ENCODE measurements at regions of chr2 and their contacts with region 1.

Region 1: DNA sequence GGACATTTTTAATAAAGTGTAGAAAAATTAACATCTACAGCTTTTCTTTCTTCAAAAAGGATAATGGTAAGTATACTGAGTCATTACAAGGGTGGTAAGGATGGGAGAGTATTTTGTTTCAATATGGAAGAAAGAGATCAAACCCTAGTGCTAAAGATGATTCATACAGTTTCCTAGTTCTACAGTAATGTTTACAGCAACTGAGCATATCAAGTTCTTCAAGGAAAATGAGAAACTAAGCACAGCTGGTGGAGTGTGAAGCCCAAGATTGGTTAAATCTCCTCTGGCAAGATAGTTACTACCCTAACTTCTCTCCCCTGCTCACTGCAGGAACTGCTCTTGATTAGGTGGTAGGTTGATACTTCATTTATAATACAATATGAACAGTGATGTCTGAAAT is 467.5 kb downstream of the XIRP2 start:
- DNase-seq: no peak
- H3K4me3 ChIP-seq: no peak overlapping the region
- H3K27ac ChIP-seq: no peak overlapping the region
- H3K4me1 ChIP-seq: no peaks in the 10 kb centered on the region
- H3K27me3 ChIP-seq: no peaks in the 10 kb centered on the region
- CTCF ChIP-seq: no peak

Region 2: DNA sequence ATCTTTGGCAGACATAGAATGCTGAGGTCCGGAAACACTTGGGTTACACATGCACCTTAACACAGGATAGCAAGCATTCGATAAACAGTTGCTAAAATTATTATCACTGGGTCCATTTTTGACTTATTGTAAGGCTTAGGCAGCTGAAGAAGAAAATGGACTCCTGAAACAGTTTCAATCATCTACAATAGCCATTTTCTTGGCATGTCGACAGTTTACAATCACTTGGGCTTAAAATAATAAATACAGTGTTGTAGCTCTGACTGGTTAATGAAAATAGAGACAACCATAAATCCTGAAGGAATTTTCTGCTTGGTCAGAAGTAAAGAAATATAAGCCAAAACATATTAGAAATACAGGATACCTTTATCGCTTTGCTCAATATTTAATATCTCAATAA is 298.4 kb before region 1 on chr2:
- intact Hi-C with region 1: no loop called
- DNase-seq: no peak
- H3K4me3 ChIP-seq: no peak overlapping the region
- H3K27ac ChIP-seq: no peak overlapping the region
- H3K4me1 ChIP-seq: no peaks in the 10 kb centered on the region
- H3K27me3 ChIP-seq: no peaks in the 10 kb centered on the region
- CTCF ChIP-seq: no peak

Region 3: DNA sequence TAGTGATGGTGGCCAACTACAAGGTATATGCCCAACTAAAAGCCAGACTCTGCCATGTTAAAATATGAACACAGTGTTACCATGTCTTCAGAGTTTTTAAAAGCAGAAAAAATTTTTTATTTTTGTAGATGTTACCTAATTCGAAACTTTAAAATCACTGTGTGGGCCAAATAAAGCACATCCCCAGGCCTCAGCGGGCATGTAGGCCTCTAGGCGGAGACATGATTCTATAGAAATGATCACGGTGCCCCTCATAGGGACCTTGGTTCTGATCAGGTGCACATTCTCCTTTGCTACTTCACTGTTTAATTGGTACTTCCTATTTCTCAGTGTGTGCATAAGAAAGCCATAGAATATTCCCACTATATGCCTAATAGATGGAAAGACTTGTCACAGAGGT is 118.3 kb before region 1 on chr2:
- intact Hi-C with region 1: no loop called
- DNase-seq: no peak
- H3K4me3 ChIP-seq: no peak overlapping the region
- H3K27ac ChIP-seq: no peak overlapping the region
- H3K4me1 ChIP-seq: no peaks in the 10 kb centered on the region
- H3K27me3 ChIP-seq: no peaks in the 10 kb centered on the region
- CTCF ChIP-seq: no peak

Region 4: DNA sequence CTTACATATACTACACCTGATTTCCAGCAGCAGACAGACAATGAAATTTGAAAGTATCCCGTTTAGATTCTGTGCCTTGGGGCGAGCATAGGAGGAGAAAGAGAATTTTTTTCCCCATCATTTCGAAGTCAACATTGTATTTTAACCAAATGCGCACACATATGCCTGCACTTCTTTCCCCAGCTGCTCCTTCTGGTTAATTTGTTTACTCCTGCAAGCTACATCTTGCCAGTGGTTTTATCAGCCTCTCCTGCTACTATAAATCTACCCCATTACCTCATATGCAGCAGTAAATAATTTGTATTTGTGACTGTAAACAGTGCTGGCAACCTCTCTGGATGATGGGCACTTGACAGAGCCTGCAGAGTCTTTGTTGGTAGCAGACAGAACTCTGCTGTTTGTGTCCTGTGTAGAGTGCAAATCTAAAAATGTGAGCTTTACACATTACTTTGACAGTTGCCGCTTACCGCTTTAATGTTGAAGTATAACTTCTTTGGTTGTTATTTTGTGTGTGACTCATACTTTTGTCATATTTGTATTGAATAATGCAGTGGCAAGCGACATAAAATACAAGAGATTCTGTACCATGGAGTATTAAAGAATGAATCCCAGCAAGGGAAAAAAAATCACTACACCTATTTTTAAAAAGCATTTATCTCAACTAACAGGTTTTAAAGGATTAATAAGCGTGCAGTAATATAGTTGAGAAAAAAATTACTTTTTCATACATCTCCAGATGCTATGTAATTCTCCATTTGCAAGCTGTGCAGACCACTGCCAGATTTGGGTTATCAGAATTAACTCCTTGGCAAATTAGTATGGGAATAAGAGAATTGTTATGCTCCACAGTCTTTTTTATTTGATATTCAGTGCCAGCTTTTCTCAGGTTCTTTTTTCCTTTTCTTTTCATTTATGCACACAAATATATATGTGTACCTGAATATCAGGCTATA is 69.3 kb after region 1 on chr2:
- intact Hi-C with region 1: no loop called
- DNase-seq: no peak
- H3K4me3 ChIP-seq: no peak overlapping the region
- H3K27ac ChIP-seq: no peak overlapping the region
- H3K4me1 ChIP-seq: no peaks in the 10 kb centered on the region
- H3K27me3 ChIP-seq: no peaks in the 10 kb centered on the region
- CTCF ChIP-seq: no peak

Region 5: DNA sequence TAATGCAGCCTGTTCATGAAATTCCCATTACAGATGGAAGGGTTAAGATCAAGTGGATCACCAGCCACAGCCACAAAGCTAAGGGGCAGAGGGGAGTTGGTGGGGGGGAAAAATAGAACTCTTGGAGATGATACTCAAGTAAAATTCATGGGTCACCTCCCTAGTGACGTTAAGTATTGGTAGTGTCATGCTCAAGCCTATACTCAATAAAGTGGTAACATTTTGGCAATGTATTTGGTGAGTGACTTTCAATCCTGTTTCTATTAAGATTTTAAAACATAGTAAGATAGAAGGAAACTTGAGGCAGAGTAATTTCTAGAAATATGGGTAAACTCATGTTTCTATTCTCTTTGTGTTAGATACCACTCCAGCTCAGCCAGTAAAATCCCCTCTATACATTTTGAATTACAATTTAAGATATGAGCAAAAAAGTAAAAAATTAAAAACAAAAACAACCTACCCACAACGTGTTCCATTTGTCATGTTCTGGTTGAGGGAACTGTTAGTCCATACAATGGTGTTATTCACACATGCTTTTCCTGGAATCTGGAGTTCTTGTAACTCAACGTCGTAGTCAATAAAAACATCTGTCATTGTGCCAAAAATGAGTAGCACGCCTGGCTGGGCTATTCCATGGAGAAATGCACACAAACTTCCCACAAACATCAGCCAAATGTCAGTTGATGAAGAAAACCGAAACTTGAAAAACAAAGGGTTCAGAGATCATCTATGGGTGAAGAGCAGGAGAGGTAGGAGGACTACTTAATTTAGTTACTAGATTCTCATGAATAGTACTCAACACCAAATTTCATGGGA is 1657.2 kb after region 1 on chr2:
- intact Hi-C with region 1: loop called (anchors 10 kb)
- DNase-seq: no peak
- H3K4me3 ChIP-seq: no peak overlapping the region
- H3K27ac ChIP-seq: peak overlapping the region; percentile 70
- H3K4me1 ChIP-seq: no peaks in the 10 kb centered on the region
- H3K27me3 ChIP-seq: no peaks in the 10 kb centered on the region
- CTCF ChIP-seq: no peak